GM13977 (cell line): ENCODE measurements at regions of chr11 and their contacts with region 1.

Region 1: DNA sequence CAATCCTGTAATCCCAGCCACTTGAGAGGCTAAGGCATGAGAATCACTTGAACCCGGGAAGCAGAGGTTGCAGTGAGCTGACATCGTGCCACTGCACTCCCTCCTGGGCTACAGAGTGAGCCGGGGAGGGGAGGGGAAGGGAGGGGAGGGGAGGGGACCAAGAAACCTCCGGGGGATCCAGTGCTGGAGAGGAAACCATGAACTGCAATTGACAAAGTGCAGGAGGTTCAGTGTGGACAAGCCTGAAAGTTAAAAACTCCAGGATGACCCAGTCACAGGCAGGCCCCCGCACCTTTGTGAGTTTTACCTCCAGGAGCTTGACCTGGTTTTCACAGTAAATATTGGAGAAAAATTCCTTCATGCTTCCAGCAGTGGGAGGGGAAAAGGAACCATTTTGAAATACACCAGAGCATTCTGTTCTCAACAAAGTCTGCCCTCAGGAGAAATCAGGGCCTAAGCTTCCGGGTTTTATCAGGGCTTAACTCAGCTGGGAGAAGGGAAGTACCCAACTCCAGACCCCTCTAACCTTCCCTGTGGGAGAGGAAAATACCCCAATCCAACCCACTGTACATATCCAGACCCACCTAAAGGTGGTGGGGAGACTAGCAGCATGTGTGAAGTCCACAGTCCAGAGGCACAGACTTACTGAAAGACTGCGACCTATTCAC is 15.5 kb upstream of the ZFTA start:
- DNase-seq: no peak
- CTCF ChIP-seq: no peak

Region 2: GRCh38 chr11:62787005-62787759 is 996.9 kb before region 1 on chr11 and contains the start of gene TMEM179B:
- in situ Hi-C with region 1: no loop called
- DNase-seq: peak; percentile 98
- CTCF ChIP-seq: peak; percentile 68

Region 3: GRCh38 chr11:62911137-62912130 is 872.6 kb before region 1 on chr11:
- in situ Hi-C with region 1: no loop called
- DNase-seq: no peak
- CTCF ChIP-seq: no peak

Region 4: DNA sequence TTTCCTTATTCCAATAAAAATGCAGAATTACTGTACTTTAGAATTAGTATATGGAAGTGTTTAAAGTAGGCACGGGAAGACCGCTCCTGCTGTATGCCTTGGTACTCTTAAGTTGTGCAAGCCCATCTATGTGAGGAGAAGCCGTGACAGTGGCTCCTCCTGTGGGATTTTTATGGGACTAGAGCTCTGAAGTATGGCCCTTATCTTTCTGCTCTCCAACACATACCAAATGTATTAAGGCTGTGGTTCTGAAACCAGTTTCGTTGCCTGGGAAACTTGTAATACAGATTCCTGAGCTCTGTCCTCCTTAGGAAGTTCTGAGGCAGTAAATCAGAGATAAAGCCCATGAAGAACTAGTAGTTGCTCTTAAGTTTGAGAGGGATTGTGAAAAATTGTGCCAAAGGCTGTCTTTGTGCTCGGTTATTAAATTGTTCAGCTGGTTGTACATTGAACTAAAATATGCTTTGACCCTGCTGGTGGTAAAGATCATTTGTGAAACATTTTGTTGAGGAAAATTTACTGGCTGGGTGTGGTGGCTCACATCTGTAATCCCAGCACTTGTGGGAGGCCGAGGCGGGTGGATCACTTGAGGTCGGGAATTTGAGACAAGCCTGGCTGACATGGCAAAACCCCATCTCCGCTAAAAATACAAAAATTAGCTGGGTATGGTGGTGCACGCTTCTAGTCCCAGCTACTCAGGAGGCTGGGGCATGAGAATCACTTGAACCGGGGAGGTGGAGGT is 73.4 kb before region 1 on chr11:
- in situ Hi-C with region 1: no loop called
- DNase-seq: no peak
- CTCF ChIP-seq: no peak

Region 5: DNA sequence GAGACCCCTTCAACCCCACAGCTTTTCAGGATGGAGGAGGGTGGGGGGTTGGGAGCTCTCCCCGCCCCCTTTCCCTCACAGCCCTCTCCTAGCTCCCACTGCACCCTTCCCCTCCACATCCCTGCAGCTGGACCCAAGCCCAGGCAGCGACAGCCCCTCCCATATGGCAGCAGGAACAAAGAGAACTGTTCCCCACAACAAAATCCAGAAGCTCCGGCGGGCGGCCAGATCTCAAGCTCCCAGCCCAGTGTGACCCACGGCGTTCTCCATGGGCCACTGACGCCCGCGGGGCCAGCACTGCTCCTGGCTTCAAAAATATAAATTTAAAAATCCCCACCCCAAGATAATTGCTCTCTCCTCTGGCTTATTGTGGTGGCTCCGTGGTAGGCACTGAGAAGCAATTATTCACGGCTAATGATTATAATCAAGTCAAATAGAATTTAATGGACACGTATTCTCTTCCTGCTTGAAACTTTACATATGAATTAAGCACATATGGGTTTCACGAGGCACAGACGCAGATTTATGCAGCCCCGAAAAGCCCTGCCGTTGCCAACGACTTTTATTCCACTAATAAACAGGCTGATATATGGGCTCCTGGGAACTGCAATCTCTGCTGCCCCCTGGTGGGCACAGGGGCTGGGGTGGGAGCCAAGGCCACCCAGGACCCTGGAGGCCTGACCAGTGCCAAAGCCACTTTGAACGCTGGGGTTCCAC is 364.3 kb after region 1 on chr11:
- in situ Hi-C with region 1: loop called (anchors 25 kb)
- DNase-seq: peak; percentile 80
- CTCF ChIP-seq: peak; percentile 88